Heart right ventricle (tissue), 16 donors: ENCODE measurements at regions of chr10 and their contacts with region 1.

Region 1: DNA sequence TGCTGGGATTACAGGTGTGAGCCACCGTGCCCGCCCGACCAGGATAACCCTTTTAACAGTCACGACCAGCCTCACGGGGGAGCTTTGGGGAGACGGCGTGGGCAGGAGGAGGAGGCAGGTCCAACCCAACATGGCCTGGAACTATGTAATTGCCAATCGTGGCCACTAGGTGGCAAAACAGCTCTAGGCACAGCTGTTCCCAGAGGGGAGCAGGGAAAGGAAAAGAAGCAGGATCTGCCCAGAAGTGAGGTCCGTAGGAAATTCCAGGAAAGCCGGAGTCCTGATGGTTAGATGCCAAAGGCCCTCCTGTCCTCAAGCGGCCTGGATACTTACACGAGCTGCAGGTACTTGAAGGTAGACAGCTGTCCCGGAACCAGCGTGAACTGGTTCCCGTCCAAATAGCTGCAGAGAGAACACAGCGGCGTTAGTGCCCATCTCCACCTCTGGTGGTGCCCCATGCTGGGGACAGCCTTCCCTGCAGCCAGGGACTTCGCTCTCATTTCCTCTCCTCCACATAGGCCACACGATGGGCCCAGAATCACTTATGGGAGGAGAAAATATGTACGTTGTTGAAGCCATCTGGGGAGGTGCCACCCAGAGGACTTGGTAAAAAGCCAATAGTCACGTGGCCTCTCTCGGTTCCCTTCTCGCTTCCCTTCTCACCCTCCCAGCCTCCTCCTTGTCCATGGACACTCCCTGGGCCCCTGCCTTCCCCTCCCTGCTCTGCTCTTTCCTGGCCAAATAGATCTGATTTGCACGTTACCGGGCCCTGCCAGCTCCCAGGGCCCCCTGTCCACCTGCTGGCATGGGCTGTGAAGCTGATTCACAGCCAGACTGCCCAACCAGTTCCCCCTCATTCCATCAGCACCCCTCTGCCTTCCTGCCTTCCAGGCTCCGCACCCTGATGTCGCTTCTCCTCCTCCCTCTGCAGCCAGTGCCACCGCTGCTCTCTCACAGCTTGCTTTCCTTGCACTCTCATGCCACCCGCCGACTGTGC is 148.1 kb downstream of the SLIT1 start:
- DNase-seq: peak; percentile 63 to 83
- ATAC-seq: peak; percentile 88 to 98 (median 92)
- H3K4me3 ChIP-seq: peak overlapping the region in 9 of 10 donors; percentile 22 to 58 (median 44)
- H3K27ac ChIP-seq: peak overlapping the region in 1 of 10 donors; percentile 36
- H3K4me1 ChIP-seq: peaks cover 5 to 12% (median 9%) of the 10 kb centered on the region in 9 donors
- H3K27me3 ChIP-seq: no peaks in the 10 kb centered on the region
- CTCF ChIP-seq: peak; percentile 75 to 91 (median 85)

Region 2: GRCh38 chr10:96896884-96897589 is 140.6 kb before region 1 on chr10:
- intact Hi-C with region 1: no loop called
- DNase-seq: no peak
- ATAC-seq: no peak
- H3K4me3 ChIP-seq: no peak overlapping the region
- H3K27ac ChIP-seq: no peak overlapping the region
- H3K4me1 ChIP-seq: peaks cover 0 to 30% (median 12%) of the 10 kb centered on the region in 9 donors
- H3K27me3 ChIP-seq: no peaks in the 10 kb centered on the region
- CTCF ChIP-seq: no peak

Region 3: DNA sequence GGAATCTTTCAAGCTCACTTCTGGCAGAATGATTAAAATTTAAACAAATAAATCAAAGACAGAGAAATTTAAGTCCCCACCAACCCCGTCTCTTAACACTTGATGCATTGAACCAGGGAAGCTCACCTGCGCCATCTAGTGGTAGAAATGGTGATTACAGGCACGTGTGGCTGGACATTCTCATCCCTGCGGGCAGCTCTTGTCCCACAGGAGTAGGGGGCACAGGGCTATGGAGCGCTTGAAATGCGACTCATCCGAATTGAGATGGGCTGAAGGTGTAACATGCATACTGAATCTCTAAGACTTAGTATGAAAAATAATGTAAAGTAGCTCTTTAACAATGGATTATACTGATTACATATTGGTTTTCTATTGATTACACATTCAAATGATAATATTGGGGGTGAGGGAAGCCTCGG is 172.9 kb after region 1 on chr10:
- intact Hi-C with region 1: loop called in 1 of 10 experiments (anchors 1 kb)
- DNase-seq: peak; percentile 53 to 61
- ATAC-seq: peak; percentile 51 to 75 (median 64)
- H3K4me3 ChIP-seq: no peak overlapping the region
- H3K27ac ChIP-seq: no peak overlapping the region
- H3K4me1 ChIP-seq: no peaks in the 10 kb centered on the region
- H3K27me3 ChIP-seq: peaks cover 0 to 23% (median 0%) of the 10 kb centered on the region in 7 donors
- CTCF ChIP-seq: peak; percentile 87 to 99 (median 97)

Region 4: GRCh38 chr10:97270523-97271154 is 233.0 kb after region 1 on chr10:
- intact Hi-C with region 1: no loop called
- DNase-seq: no peak
- ATAC-seq: no peak
- H3K4me3 ChIP-seq: peak overlapping the region in 1 of 10 donors; percentile 4
- H3K27ac ChIP-seq: no peak overlapping the region
- H3K4me1 ChIP-seq: peaks cover 0 to 9% (median 0%) of the 10 kb centered on the region in 9 donors
- H3K27me3 ChIP-seq: no peaks in the 10 kb centered on the region
- CTCF ChIP-seq: no peak